AG04450 (cell line): ENCODE measurements at regions of chr14 and their contacts with region 1.

Region 1: GRCh38 chr14:24271134-24271833 is at the start of gene RABGGTA:
- DNase-seq: peak; percentile 66
- H3K4me3 ChIP-seq: peak within 1 kb of the TSS; percentile 88
- H3K27ac ChIP-seq: peak within 1 kb of the TSS; percentile 87
- H3K27me3 ChIP-seq: no peaks in the 10 kb centered on the region
- CTCF ChIP-seq: peak; percentile 67
- polyA plus RNA-seq, gene RABGGTA: 17.9 and 24.7 TPM in 2 replicates

Region 2: GRCh38 chr14:24123508-24124417 is 147.5 kb before region 1 on chr14:
- CTCF ChIA-PET with region 1: no interaction called
- POLR2A ChIA-PET with region 1: no interaction called
- DNase-seq: no peak
- H3K4me3 ChIP-seq: no peak overlapping the region
- H3K27ac ChIP-seq: no peak overlapping the region
- H3K27me3 ChIP-seq: no peaks in the 10 kb centered on the region
- CTCF ChIP-seq: no peak

Region 3: DNA sequence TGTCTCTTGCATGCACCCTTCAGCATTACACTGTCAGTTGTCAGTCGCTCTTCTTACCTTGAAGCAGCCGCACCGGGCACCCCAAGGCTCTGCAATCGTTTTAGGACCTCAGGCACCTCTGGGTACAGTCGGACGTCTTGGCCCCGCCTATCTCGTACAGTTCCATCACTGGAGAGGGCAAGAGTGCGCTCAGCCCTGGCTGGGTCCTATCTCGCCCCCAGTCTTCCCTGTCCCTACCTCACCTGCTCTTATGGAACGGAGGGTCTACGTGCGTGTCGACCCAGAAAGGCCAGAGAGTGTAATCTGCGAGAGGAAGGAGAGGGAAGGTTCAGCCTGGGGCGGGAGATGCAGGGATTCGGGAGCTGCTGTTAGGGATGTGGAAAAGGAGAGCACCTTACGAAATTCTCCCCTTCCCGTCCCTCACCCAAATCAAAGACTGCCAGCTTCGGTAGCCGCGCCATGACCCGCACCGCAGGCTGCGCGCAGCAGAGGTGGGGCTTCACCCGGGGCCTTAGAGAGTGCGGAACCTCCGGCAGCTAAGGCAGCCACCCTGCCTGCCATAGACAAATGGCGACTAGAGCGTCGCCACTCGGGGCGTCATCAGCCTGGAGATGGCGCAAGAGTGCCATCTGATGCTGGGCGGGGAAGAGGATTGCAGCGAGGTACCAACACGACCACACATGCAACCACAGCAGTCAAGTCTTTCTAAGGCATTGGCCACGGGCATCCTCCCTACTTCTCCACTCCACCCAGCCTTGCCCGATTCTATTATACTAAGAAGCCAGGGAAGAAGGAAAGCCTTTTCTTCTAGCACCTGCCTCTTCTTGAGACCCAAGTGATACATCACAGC is 55.6 kb before region 1 on chr14 and contains the start of gene MDP1:
- CTCF ChIA-PET with region 1: no interaction called
- POLR2A ChIA-PET with region 1: interaction called, 10 read pairs
- DNase-seq: peak; percentile 43
- H3K4me3 ChIP-seq: peak within 1 kb of the TSS; percentile 79
- H3K27ac ChIP-seq: peak within 1 kb of the TSS; percentile 84
- H3K27me3 ChIP-seq: no peaks in the 10 kb centered on the region
- CTCF ChIP-seq: peak; percentile 41
- polyA plus RNA-seq, gene MDP1: 14.9 and 16.1 TPM in 2 replicates

Region 4: DNA sequence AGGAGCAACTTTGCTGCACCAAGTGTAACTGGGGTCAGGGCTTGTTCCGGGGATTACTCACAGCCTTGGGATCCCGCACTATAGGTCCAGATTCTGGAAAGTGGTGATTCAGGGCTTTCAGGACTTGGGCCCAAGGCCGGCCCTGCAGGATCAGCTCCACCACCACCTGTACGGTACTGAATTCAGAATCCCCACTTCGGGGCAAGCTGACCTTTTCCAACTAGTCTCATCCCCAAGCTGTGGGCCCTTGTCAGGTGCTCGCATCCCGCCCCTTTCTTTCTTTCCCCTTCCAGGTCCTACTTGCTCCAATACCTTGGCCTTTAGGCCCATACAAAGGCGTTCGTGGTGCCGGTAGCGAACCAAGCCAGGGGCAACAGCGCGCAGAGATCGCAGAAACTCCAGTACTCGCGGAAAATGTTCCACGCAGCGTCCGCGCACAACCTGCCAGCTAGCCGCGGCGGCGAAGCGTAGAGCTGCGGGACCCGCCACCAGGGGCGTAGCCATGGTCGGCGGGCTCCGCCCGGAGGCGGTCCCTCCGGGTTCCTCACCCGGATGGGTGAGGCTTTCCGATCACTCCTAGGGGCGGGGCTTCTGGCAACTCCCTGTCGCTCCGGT is 29.3 kb before region 1 on chr14:
- CTCF ChIA-PET with region 1: interaction called, 17 read pairs
- POLR2A ChIA-PET with region 1: interaction called, 50 read pairs
- DNase-seq: peak; percentile 72
- H3K4me3 ChIP-seq: peak overlapping the region; percentile 92
- H3K27ac ChIP-seq: peak overlapping the region; percentile 99
- H3K27me3 ChIP-seq: no peaks in the 10 kb centered on the region
- CTCF ChIP-seq: peak; percentile 55

Region 5: DNA sequence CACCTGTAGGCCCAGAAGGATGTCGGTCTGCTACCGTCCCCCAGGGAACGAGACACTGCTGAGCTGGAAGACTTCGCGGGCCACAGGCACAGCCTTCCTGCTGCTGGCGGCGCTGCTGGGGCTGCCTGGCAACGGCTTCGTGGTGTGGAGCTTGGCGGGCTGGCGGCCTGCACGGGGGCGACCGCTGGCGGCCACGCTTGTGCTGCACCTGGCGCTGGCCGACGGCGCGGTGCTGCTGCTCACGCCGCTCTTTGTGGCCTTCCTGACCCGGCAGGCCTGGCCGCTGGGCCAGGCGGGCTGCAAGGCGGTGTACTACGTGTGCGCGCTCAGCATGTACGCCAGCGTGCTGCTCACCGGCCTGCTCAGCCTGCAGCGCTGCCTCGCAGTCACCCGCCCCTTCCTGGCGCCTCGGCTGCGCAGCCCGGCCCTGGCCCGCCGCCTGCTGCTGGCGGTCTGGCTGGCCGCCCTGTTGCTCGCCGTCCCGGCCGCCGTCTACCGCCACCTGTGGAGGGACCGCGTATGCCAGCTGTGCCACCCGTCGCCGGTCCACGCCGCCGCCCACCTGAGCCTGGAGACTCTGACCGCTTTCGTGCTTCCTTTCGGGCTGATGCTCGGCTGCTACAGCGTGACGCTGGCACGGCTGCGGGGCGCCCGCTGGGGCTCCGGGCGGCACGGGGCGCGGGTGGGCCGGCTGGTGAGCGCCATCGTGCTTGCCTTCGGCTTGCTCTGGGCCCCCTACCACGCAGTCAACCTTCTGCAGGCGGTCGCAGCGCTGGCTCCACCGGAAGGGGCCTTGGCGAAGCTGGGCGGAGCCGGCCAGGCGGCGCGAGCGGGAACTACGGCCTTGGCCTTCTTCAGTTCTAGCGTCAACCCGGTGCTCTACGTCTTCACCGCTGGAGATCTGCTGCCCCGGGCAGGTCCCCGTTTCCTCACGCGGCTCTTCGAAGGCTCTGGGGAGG is 39.6 kb after region 1 on chr14 and contains the start of gene LTB4R:
- CTCF ChIA-PET with region 1: interaction called, 8 read pairs
- POLR2A ChIA-PET with region 1: interaction called, 10 read pairs
- DNase-seq: no peak
- H3K4me3 ChIP-seq: peak within 1 kb of the TSS; percentile 20; the same call in 1 of the 2 replicates
- H3K27ac ChIP-seq: no peak within 1 kb of the TSS
- H3K27me3 ChIP-seq: peaks cover 2% of the 10 kb centered on the region
- CTCF ChIP-seq: peak; percentile 12; the same call in 1 of the 2 replicates
- polyA plus RNA-seq, gene LTB4R: 0.98 and 1.2 TPM in 2 replicates